Mammary epithelial cell (primary cell): ENCODE measurements at regions of chr9 and their contacts with region 1.

Region 1: DNA sequence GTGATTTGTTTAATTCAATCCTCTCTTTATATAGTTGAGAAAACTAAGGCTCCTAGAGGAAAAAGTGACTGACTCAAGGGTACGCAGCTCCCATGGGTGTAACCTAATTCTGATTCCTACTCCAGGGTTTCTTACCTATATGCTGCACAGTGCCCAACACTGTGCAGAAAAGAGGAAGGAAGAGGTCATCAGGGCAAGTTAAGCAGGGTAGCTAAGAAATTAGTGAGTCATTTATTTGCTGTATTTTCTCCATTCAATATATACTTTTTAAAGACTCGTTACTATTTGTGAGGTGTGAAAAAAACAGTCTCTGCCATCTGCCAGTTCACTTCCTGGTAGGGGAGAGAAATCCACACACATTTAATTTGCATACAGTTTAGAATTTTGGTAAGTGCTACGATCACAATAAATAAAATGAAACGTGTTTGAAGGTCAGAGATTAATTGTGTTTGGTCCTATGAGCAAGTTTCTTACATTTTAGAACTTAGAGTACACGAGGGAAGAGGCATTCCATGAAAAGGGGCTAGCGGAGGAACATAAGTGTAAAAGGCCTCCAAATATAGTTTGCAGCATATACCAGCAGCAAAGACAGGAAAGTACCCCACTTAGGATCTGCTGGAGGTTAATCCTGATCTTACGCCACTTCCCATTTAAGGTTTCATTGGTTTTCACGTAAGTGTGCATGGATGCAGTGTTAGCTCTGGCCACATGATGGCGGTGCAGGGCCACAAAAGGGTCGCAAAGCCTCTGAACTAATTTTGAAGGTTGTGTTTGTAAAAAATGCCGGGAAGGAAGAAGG is 59.9 kb upstream of the TLR4 start:
- DNase-seq: peak; percentile 55
- H3K4me3 ChIP-seq: peak overlapping the region; percentile 5 to 36 (median 24)
- H3K27ac ChIP-seq: no peak overlapping the region
- H3K4me1 ChIP-seq: no peaks in the 10 kb centered on the region
- H3K27me3 ChIP-seq: peaks cover 5% of the 10 kb centered on the region
- CTCF ChIP-seq: peak; percentile 98 to 99

Region 2: GRCh38 chr9:117487555-117488175 is 156.7 kb before region 1 on chr9:
- CTCF ChIA-PET with region 1: no interaction called
- dilution Hi-C with region 1: no loop called
- in situ Hi-C with region 1: no loop called
- intact Hi-C with region 1: loop called (anchors 10 kb)
- DNase-seq: peak; percentile 65
- H3K4me3 ChIP-seq: no peak overlapping the region
- H3K27ac ChIP-seq: no peak overlapping the region
- H3K4me1 ChIP-seq: no peaks in the 10 kb centered on the region
- H3K27me3 ChIP-seq: no peaks in the 10 kb centered on the region
- CTCF ChIP-seq: peak; percentile 89 to 97

Region 3: DNA sequence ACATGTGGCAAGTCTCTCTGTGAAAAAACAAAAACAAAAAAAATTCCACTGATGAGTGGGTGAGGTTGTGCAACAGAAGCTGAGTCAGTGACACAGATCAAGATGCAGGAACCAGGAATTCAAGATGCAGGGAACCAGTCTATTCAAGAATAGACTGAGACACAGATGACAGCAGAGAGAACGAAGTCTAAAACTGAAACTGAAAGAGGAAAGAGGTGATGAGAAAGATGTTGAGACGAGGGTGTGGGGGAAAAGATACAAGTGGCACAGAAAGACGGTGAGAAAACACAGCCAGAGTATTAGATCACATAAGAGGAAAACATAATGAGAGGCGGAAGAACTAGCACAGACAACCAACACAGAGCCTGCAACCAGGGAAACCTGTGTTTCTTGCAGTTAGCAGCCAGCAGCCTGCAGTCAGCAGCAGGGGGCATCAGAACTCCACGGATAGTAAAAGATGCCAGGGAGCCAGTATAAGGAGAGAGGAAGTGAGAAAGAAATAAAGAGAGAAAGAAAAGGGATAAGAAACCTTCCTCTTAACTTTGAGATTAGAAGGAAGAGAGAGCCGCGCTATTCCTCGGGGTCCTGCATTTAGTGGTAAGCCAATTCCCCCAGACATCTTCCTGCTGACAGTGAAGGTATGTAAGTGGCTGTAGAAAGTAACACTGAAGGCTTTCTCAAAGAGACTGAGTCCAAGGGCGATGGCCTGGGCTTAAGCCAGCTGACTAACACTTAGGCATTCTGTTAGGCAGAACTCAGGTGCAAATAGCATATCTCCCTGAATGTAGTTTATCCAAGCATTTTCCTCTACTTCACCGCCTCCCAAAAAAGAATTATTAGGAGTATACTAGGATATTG is 138.8 kb after region 1 on chr9:
- CTCF ChIA-PET with region 1: no interaction called
- dilution Hi-C with region 1: no loop called
- in situ Hi-C with region 1: no loop called
- intact Hi-C with region 1: loop called (anchors 1 kb)
- DNase-seq: peak; percentile 71
- H3K4me3 ChIP-seq: peak overlapping the region; percentile 54 to 72 (median 55)
- H3K27ac ChIP-seq: no peak overlapping the region
- H3K4me1 ChIP-seq: peaks cover 7% of the 10 kb centered on the region
- H3K27me3 ChIP-seq: no peaks in the 10 kb centered on the region
- CTCF ChIP-seq: peak; percentile 92 to 93

Region 4: GRCh38 chr9:117927354-117927753 is 283.0 kb after region 1 on chr9:
- CTCF ChIA-PET with region 1: no interaction called
- dilution Hi-C with region 1: no loop called
- in situ Hi-C with region 1: no loop called
- intact Hi-C with region 1: loop called (anchors 2 kb)
- DNase-seq: no peak
- H3K4me3 ChIP-seq: no peak overlapping the region
- H3K27ac ChIP-seq: no peak overlapping the region
- H3K4me1 ChIP-seq: no peaks in the 10 kb centered on the region
- H3K27me3 ChIP-seq: no peaks in the 10 kb centered on the region
- CTCF ChIP-seq: peak; percentile 30 to 65

Region 5: GRCh38 chr9:118059484-118060278 is 415.3 kb after region 1 on chr9:
- CTCF ChIA-PET with region 1: no interaction called
- dilution Hi-C with region 1: no loop called
- in situ Hi-C with region 1: no loop called
- intact Hi-C with region 1: loop called (anchors 5 kb)
- DNase-seq: peak; percentile 19
- H3K4me3 ChIP-seq: no peak overlapping the region
- H3K27ac ChIP-seq: no peak overlapping the region
- H3K4me1 ChIP-seq: no peaks in the 10 kb centered on the region
- H3K27me3 ChIP-seq: no peaks in the 10 kb centered on the region
- CTCF ChIP-seq: no peak

Region 6: DNA sequence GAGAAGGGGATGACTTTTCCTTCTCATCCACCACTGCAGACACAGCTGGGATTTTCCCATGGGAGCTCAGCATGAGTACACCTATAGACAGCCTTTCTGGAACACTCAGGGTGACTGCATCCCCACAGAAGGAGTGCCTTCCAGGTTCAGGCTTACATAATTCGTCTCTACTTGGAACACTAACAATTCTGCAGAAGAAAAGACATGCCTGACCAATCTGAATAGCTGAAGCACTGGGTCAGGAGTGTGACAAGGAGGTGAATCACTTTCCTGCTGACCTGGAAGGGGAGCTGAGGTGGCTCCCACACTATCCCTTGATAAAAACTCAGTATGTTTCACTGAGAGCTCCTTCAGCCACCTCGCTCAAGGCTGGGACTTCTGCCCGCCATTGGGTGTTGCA is 485.2 kb after region 1 on chr9:
- CTCF ChIA-PET with region 1: no interaction called
- dilution Hi-C with region 1: no loop called
- in situ Hi-C with region 1: loop called in 1 of 2 experiments (anchors 25 kb)
- intact Hi-C with region 1: no loop called
- DNase-seq: peak; percentile 63
- H3K4me3 ChIP-seq: no peak overlapping the region
- H3K27ac ChIP-seq: no peak overlapping the region
- H3K4me1 ChIP-seq: peaks cover 6% of the 10 kb centered on the region
- H3K27me3 ChIP-seq: no peaks in the 10 kb centered on the region
- CTCF ChIP-seq: no peak